ENCODE measurements at regions of chr22 and their contacts with region 1.

Region 1: DNA sequence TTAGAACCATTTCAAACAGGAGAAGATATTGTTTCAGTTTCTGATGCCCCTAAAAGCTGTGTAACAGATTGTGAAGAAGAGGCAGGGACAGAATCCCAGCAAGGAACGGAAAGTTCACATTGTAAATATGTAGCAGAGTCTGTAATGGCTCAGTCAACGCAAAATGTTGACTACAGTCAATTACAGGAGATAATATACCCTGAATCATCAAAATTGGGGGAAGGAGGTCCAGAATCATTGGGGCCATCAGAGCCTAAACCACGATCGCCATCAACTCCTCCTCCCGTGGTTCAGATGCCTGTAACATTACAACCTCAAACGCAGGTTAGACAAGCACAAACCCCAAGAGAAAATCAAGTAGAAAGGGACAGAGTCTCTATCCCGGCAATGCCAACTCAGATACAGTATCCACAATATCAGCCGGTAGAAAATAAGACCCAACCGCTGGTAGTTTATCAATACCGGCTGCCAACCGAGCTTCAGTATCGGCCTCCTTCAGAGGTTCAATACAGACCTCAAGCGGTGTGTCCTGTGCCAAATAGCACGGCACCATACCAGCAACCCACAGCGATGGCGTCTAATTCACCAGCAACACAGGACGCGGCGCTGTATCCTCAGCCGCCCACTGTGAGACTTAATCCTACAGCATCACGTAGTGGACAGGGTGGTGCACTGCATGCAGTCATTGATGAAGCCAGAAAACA is 40.8 kb downstream of the IGLL1 start:
- DNase-seq: peak; percentile 83

Region 2: GRCh38 chr22:23322547-23322946 is 216.7 kb before region 1 on chr22:
- intact Hi-C with region 1: loop called (anchors 5 kb)
- DNase-seq: no peak

Region 3: DNA sequence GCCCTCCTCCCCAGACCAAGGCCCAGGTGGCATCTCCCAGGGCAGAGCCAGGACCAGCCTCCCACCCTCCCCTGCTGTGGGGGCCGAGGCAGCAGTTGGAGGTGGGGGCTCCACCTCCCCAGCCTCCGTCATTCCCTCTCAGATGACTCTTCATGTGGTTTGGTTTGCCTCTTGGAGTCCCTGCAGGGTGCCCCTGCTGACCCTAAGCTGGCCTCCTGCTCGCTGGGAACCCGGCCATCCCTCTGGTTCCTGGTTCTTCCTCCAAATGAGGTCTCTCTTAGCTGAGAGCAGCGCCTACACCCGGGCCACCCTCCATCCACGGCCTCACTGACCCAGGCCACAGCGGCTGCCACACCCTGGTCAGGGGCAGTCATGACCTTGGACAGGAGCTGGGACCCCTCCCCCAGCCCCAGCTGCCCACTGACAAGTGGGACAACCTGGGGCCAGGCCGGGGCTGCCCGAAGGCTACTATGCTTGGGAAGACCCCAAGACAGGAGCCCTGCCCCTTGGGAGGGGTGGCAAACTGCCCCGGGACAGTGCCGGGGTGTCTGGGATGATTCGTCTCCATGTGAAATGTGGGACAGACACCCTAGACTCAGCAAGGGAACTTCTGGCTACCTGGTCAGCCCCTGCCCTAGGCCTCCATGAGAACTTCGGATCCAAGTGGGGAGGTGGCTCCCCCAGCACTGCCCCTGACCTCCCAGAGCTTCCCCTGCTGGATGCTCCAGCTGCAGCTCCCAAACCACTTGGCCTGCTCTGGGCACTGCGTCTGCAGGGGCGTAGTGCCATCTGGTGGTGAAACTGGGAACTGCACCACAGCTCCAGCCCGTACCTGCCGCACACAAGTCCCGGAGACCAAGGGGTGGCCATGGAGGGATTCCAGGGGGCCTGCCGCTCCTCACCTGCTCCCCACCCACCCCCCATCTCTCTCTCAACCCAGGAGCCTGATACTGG is 153.7 kb before region 1 on chr22:
- intact Hi-C with region 1: loop called (anchors 5 kb)
- DNase-seq: peak; percentile 91

Region 4: DNA sequence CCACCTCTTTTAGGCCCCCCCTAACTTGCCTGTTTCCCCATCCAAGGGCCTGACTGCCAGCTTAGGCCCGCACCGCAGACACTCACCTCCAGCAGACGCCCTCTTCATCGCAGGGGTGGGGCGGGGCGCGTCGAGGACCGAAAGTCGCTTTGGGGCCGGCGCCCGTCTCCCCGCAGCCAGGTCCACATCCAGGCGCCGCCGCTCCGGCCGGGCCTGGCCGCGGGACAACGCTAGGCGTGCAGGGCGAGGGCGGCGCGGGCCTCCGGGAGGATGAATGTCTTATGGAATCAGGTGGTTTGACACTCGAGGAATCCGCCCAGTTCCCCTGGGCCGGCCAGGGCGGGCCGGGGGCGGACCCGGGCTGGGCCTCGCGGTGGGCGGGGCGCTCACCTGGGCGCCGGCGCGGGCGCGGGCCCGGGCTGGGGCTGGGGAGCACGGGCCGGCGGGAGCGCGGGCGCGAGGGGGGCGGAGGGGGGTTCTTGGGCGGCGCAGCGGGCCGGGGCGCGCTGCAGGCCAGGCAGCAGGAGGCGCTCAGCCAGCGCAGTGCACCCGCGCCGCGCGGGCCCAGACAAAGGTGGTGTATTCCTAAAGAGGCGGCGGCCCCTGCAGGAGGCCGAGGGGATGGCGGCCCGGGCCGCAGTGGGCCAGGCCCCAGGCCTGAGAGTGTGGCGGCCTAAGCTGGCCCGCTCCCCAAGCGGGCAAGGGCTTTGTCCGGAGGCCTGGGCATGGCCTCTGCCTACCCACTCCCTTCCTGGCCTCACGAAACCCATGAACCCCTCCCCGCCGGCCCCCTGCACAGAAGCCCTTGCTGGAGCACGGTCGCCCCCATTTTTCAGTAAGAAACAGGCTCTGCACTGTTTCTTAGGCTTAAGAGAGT is 136.8 kb before region 1 on chr22:
- intact Hi-C with region 1: loop called (anchors 5 kb)
- DNase-seq: peak; percentile 75

Region 5: GRCh38 chr22:23521441-23522113 is 17.7 kb before region 1 on chr22:
- intact Hi-C with region 1: loop called (anchors 2 kb)
- DNase-seq: peak; percentile 91

Region 6: GRCh38 chr22:23591201-23591791 is 52.0 kb after region 1 on chr22:
- intact Hi-C with region 1: loop called (anchors 2 kb)
- DNase-seq: no peak

Region 7: GRCh38 chr22:23685205-23685784 is 146.0 kb after region 1 on chr22:
- intact Hi-C with region 1: no loop called
- DNase-seq: peak; percentile 47

Region 8: DNA sequence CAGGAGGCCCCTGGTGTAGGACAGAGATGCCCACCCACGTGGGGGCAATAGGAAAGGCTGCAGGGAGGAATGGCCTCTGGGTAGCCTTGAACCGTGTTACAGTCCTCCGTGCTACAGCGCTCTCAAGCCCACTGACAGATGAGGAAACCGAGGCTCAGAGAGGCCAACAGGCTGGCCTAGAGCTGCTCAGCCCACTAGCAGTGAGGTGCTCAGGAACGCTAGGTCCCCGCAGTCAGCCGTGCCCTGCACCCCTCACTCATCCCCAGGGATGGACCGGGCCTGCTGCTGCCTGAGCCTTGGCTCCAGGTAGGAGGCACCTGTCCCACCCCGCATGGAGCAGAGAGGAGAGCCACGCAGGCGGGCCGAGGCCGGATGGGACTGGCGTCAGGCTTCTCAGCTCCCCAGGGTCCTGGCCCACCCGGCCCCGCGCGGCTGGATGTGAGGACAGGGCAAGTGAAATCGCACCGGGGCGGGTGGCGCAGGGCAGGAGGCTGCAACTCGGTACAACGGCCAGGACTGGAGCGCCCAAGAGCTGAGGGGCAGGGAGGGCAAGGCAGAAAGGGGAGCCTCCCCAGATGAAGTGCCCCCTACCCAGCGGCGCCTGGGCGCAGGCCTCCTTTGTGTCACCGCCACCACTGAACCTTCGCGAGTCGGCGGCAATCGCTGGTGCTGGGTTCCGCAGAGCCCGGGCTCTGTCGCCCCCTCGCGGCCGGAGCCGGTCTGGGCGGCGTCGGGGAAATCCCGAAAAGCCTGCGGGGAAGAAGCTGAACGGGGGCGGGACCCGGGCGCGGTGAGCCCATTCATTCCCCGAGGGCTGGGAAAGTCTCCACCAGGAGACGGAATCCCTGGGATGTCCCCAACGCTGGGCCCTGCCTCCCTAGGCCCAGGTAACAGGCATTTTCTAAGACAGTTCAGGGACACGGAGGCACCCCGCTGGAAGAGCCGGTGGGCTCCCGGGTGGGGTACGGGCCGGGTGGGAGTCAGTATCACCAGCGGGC is 310.0 kb after region 1 on chr22:
- intact Hi-C with region 1: loop called (anchors 5 kb)
- DNase-seq: peak; percentile 93

Measured in cardiac septum (tissue), 1 donor.